ENCODE measurements at regions of chr1 and their contacts with region 1.

Region 1: DNA sequence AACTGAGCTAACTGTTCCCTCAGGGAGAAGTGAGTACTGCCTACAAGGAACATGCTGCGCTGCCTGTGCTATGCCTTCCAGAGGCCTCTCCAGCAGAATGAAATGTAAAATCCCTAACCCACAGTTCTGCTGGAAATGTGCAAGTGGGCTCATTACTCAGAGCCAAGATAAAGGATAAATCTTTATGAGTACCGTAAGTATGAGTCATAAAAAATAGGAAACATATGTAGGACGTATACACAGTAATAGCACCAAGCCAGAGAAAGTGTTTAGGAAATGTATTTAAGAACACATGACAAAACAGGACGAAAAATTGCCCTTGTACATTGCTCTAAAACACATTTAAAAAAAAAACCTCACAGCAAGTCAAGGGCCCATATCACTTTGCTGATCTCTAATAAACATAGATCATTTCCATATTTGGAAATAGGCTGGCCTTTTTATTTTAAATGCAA is 104.6 kb downstream of the TGFBR3 start:
- DNase-seq: no peak
- ATAC-seq: no peak
- H3K4me3 ChIP-seq: no peak overlapping the region
- H3K27ac ChIP-seq: peak overlapping the region in 8 of 10 donors; percentile 24 to 64 (median 32)
- H3K4me1 ChIP-seq: peaks cover 0 to 60% (median 45%) of the 10 kb centered on the region in 9 donors
- H3K27me3 ChIP-seq: no peaks in the 10 kb centered on the region
- CTCF ChIP-seq: no peak

Region 2: GRCh38 chr1:91529856-91530255 is 251.5 kb before region 1 on chr1:
- intact Hi-C with region 1: loop called in 1 of 10 experiments (anchors 10 kb)
- DNase-seq: no peak
- ATAC-seq: peak in 1 of 8 donors; percentile 50
- H3K4me3 ChIP-seq: no peak overlapping the region
- H3K27ac ChIP-seq: no peak overlapping the region
- H3K4me1 ChIP-seq: peaks cover 0 to 5% (median 0%) of the 10 kb centered on the region in 9 donors
- H3K27me3 ChIP-seq: no peaks in the 10 kb centered on the region
- CTCF ChIP-seq: peak in 7 of 9 donors; percentile 19 to 58 (median 32)

Region 3: GRCh38 chr1:91754348-91754747 is 27.1 kb before region 1 on chr1:
- intact Hi-C with region 1: loop called in 1 of 10 experiments (anchors 5 kb)
- DNase-seq: no peak
- ATAC-seq: no peak
- H3K4me3 ChIP-seq: no peak overlapping the region
- H3K27ac ChIP-seq: peak overlapping the region in 9 of 10 donors; percentile 6 to 71 (median 43)
- H3K4me1 ChIP-seq: peaks cover 6 to 65% (median 47%) of the 10 kb centered on the region in 9 donors
- H3K27me3 ChIP-seq: no peaks in the 10 kb centered on the region
- CTCF ChIP-seq: no peak

Region 4: GRCh38 chr1:91913018-91913417 is 131.6 kb after region 1 on chr1:
- intact Hi-C with region 1: no loop called
- DNase-seq: no peak
- ATAC-seq: no peak
- H3K4me3 ChIP-seq: no peak overlapping the region
- H3K27ac ChIP-seq: no peak overlapping the region
- H3K4me1 ChIP-seq: peaks cover 0 to 10% (median 0%) of the 10 kb centered on the region in 9 donors
- H3K27me3 ChIP-seq: no peaks in the 10 kb centered on the region
- CTCF ChIP-seq: no peak

Measured in heart right ventricle (tissue), 16 donors.